Esophagus muscularis mucosa (tissue), 4 donors: ENCODE measurements at regions of chr4 and their contacts with region 1.

Region 1: DNA sequence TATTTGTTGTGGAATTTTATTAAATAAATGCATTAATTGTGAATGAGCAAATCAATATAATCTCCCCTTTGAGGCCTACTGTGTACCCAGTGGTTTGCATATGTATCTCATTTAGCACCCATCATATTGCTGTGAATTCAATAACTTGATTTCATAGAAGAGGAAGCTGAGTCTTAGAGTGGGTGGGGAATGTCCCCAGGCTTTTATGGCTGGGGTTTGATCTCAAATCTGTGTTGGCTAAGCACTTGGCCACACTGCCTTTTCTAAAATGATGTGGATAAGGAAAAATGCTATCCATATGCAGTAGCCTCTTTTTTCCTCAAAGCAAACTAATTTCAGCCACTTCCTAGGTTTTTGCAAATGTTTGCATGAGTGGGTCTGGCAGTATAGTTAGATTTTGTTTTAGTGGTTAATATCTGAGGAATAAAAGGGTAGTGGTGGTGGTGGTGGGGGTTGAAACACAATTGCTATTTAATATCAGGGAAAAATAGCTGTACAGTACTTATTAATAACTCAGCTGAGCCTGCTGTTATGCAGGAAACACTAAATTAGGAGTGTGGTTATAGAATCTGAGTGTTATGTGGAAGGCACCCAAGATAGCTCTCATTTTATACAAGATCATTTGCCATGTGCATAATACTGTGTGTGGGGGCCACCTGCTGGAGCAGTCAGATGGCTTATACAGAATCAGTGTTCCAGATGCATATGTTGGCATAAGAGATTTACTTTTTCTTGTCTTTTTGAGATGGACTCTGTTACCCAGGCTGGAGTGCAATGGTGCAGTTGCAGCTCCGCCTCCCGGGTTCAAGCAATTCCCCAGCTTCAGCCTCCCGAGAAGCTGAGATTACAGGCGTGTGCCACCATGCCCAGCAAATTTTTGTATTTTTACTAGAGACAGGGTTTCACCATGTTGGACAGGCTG is 108.0 kb downstream of the TMEM131L start:
- DNase-seq: no peak
- H3K4me3 ChIP-seq: no peak overlapping the region
- H3K27ac ChIP-seq: peak overlapping the region in 3 of 4 donors; percentile 45 to 55 (median 52)
- H3K4me1 ChIP-seq: peaks cover 19 to 40% (median 33%) of the 10 kb centered on the region in 4 donors
- H3K27me3 ChIP-seq: no peaks in the 10 kb centered on the region
- CTCF ChIP-seq: peak; percentile 69 to 78 (median 74)
- EP300 ChIP-seq: no peak
- POLR2A ChIP-seq: no peak

Region 2: GRCh38 chr4:151957153-151957552 is 1617.0 kb before region 1 on chr4:
- intact Hi-C with region 1: no loop called
- DNase-seq: no peak
- H3K4me3 ChIP-seq: no peak overlapping the region
- H3K27ac ChIP-seq: no peak overlapping the region
- H3K4me1 ChIP-seq: peaks cover 0 to 13% (median 9%) of the 10 kb centered on the region in 4 donors
- H3K27me3 ChIP-seq: no peaks in the 10 kb centered on the region
- CTCF ChIP-seq: no peak
- EP300 ChIP-seq: no peak
- POLR2A ChIP-seq: no peak

Region 3: DNA sequence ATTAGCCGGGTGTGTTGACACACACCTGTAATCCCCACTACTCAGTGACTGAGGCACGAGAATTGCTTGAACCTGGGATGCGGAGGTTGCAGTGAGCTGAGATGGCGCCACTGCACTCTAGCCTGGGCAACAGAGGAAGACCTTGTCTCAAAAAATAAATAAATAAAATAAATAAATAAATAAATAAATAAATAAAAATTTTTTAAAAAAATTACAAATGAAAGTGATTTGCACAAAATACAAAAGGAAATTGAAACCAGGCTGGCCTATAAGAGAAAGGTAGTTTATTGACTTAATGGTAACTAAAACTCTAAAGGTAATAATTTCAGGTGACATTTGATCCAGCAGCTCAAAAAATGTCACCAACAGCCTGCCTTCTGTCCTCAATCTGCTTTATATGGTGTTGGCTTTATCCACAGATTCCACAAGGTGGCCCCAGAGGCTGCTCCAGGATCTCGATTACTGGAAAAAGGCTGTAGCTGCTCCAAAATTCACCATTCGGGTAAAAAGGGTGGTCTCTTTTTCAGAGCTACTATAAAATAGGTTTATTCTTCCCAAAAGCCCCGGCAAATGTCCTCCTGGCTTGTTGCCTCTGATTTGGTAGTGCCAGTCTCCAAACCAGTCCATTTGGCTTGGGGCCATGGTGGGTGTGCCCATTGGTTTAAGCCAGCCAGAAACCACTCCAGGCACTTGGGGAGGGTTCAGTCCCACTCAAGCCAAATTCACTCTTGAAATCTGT is 431.3 kb before region 1 on chr4:
- intact Hi-C with region 1: loop called (anchors 10 kb)
- DNase-seq: no peak
- H3K4me3 ChIP-seq: peak overlapping the region in 3 of 4 donors; percentile 6 to 36 (median 32)
- H3K27ac ChIP-seq: no peak overlapping the region
- H3K4me1 ChIP-seq: peaks cover 5 to 11% (median 10%) of the 10 kb centered on the region in 4 donors
- H3K27me3 ChIP-seq: no peaks in the 10 kb centered on the region
- CTCF ChIP-seq: peak; percentile 82 to 87 (median 83)
- EP300 ChIP-seq: no peak
- POLR2A ChIP-seq: no peak

Region 4: GRCh38 chr4:153221783-153222706 is 352.1 kb before region 1 on chr4:
- intact Hi-C with region 1: loop called (anchors 10 kb)
- DNase-seq: no peak
- H3K4me3 ChIP-seq: peak overlapping the region; percentile 61 to 84 (median 77)
- H3K27ac ChIP-seq: peak overlapping the region; percentile 90 to 98 (median 95)
- H3K4me1 ChIP-seq: peaks cover 21 to 39% (median 36%) of the 10 kb centered on the region in 4 donors
- H3K27me3 ChIP-seq: no peaks in the 10 kb centered on the region
- CTCF ChIP-seq: no peak
- EP300 ChIP-seq: no peak
- POLR2A ChIP-seq: no peak

Region 5: DNA sequence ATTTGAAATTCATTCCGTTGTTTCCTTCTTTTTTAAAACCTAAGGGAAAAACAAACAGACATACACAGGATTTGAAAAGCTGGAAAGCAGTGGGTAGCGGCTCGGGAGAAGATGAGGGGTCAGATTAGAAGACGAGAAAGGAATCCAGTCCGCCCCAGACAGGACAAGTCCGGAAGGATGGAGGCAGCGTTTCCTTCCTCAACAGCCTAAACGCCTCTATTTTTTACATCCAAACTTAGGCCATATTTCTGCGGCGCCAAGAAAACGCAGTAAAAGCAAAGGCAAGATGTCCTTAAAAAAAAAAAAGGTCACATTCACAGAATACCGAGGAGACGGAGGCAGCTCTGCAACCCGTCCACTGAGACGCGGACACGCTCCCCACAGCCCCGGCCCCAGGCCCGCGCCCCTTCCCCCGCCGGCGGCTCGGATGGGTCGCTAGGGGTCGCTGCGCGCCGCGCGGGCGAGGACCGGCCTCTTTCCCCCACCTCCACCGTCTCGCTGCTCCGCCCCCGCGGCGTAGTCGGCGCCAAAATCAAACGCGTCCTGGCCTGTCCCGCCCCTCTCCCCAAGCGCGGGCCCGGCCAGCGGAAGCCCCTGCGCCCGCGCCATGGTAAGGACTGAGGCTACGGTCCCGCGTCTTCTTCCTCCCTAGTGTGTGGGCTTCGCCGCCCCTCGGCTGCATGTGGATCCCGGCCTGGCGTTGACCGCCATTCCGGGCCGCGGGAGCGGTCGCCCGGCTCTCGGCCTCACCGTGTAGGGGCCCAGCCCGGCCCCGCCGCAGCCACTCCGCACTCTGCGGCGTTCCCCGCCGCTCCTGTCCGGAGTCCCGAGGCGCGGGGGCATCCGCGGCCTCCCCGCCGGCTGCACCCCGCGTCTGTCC is 229.8 kb before region 1 on chr4 and contains the start of gene MND1:
- intact Hi-C with region 1: loop called (anchors 1 kb)
- DNase-seq: no peak
- H3K4me3 ChIP-seq: peak within 1 kb of the TSS; percentile 82 to 94 (median 94)
- H3K27ac ChIP-seq: peak within 1 kb of the TSS in 3 of 4 donors; percentile 48 to 65 (median 60)
- H3K4me1 ChIP-seq: peaks cover 13 to 20% (median 16%) of the 10 kb centered on the region in 4 donors
- H3K27me3 ChIP-seq: no peaks in the 10 kb centered on the region
- CTCF ChIP-seq: peak; percentile 78 to 98 (median 93)
- EP300 ChIP-seq: no peak
- POLR2A ChIP-seq: no peak
- total RNA-seq, gene MND1: 0.99 TPM in 1 of 4 donors, not detected in the others

Region 6: DNA sequence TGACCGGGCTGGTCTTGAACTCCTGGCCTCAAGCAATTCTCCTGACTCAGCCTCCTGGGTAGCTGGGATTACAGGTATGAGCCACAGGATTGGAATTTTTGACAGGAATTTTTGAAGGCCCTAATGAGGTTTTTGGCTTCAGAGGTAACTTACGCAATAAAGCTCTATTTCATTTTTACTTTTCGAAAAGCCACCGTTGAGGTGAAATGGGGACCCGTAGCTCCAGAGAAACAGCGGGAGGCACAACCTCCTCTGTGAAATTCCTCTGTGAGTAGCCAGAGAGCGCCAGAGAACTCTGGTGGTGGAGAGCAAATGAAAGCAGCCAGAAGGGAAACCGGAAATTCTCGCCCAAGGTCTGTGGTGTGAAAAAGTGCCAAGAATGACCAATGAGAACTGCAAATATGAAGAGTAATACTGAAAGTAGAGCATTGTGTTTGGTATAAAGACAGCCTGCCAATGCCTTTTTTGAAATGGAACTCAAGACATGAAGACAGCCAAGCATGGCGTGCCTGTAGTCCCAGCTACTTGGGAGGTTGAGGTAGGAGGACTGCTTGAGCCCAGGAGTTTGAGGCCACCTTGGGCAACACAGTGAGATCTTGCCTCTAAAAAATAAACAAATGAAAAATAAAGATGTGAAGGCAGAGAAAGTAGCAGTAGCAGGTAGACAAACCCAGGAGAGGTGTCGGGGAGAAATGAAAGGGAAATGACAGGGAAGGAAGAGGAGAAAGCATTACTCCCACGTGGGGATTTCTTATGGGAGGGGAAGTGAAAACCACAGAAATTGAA is 141.0 kb before region 1 on chr4:
- intact Hi-C with region 1: loop called (anchors 10 kb)
- DNase-seq: no peak
- H3K4me3 ChIP-seq: peak overlapping the region in 1 of 4 donors; percentile 12
- H3K27ac ChIP-seq: peak overlapping the region in 1 of 4 donors; percentile 21
- H3K4me1 ChIP-seq: peaks cover 0 to 27% (median 21%) of the 10 kb centered on the region in 4 donors
- H3K27me3 ChIP-seq: no peaks in the 10 kb centered on the region
- CTCF ChIP-seq: peak; percentile 43 to 66 (median 60)
- EP300 ChIP-seq: no peak
- POLR2A ChIP-seq: no peak

Region 7: DNA sequence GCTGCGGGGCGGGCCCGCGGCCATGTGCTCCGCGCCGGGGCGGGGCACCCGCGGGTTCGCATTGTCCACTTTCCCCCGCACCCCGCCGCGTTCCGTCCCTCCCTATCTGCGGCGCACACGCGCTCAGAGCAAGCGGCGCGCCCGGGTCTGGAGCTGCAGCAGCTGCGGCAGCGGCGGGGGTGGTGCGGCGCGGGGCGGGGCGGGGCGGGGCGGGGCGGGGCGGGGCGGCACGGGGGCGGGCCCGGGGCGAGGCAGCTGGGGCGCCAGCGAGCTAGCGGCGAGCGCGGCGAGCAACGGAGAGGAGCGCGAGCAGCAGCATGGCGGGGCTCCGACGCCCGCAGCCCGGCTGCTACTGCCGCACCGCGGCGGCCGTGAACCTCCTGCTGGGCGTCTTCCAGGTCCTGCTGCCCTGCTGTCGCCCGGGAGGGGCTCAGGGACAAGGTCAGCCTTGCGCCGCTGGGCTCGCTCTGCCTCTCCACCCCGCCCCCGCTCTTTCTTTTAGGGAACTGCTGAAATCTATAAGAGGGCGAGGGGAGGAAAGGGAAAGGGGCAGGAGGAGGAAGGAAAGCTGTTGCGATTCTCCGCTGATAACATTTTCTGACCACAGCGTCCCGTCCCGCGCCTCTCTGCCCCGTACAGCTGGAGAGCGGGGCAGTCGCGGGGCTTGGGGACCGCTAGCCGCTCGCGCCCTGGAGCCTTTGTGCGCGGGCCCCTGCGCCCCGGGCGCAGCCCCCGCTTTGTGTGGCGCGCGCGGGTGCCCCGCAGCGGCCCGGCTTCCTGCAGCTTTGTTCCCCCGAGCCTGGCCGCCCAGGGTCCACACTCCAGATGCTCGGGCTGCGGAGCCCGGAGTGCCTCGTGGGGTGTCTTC is 107.8 kb before region 1 on chr4 and contains the start of gene TMEM131L:
- intact Hi-C with region 1: loop called (anchors 2 kb)
- DNase-seq: peak; percentile 93
- H3K4me3 ChIP-seq: peak within 1 kb of the TSS; percentile 61 to 95 (median 88)
- H3K27ac ChIP-seq: peak within 1 kb of the TSS; percentile 82 to 89 (median 88)
- H3K4me1 ChIP-seq: peaks cover 27 to 64% (median 54%) of the 10 kb centered on the region in 4 donors
- H3K27me3 ChIP-seq: no peaks in the 10 kb centered on the region
- CTCF ChIP-seq: peak; percentile 10 to 33 (median 14)
- EP300 ChIP-seq: no peak
- POLR2A ChIP-seq: peak; percentile 20
- total RNA-seq, gene TMEM131L: 10.3 to 16.3 (median 12.1) TPM